Natural killer cell (primary cell): ENCODE measurements at regions of chr12 and their contacts with region 1.

Region 1: GRCh38 chr12:6925540-6926279 is 2.0 kb upstream of the ATN1 start:
- DNase-seq: no peak
- ATAC-seq: no peak
- H3K4me3 ChIP-seq: no peak overlapping the region
- H3K4me3 Mint-ChIP-seq: peak overlapping the region; percentile 90
- H3K27ac ChIP-seq: no peak overlapping the region
- H3K27ac Mint-ChIP-seq: peak overlapping the region in 1 of 2 donors; percentile 89
- H3K4me1 ChIP-seq: peaks cover 43% of the 10 kb centered on the region
- H3K4me1 Mint-ChIP-seq: peaks cover 38 to 43% of the 10 kb centered on the region in 2 donors
- H3K27me3 ChIP-seq: no peaks in the 10 kb centered on the region
- H3K27me3 Mint-ChIP-seq: no peaks in the 10 kb centered on the region
- CTCF ChIP-seq: no peak

Region 2: DNA sequence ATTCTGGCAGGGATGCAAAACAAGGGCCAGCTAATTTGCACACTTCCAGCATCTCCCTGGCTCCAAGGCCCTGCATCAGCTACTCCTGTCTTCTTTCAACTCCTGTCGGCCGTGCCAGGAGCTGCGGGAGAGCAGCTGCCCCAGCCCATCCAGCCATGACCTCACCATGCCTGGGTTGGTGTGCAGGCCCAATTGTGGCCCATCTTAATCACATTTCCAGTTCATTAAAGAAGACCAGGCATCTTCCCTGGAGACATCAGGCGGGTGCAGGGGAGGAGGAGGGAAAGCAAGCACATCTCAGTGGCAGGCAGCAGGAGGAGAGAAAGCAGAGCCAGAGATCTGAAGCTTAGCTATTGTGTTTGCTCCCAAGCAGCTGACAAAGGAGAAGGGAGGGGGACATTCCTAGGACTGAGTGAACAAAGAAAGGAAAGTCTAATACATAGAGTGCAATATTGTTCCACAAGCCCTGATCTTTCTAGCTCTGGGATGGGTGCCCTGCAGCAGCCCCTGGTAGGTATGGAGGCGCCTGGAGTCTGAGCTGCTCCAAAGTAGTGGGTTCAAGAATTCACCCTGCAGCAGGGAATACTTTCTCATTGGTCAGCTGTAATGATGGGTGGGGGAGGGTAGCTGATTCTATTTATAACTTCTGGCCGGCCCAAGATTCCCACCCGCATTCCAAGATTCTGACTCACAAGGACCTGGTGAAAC is 841.3 kb before region 1 on chr12:
- intact Hi-C with region 1: no loop called
- DNase-seq: no peak
- ATAC-seq: no peak
- H3K4me3 ChIP-seq: no peak overlapping the region
- H3K4me3 Mint-ChIP-seq: no peak overlapping the region
- H3K27ac ChIP-seq: no peak overlapping the region
- H3K27ac Mint-ChIP-seq: no peak overlapping the region
- H3K4me1 ChIP-seq: no peaks in the 10 kb centered on the region
- H3K4me1 Mint-ChIP-seq: no peaks in the 10 kb centered on the region
- H3K27me3 ChIP-seq: no peaks in the 10 kb centered on the region
- H3K27me3 Mint-ChIP-seq: peaks cover 7 to 9% of the 10 kb centered on the region in 2 donors
- CTCF ChIP-seq: no peak

Region 3: GRCh38 chr12:6647083-6647604 is 278.6 kb before region 1 on chr12 and contains the start of gene ACRBP:
- intact Hi-C with region 1: no loop called
- DNase-seq: peak; percentile 47 to 54
- ATAC-seq: peak; percentile 79 to 93 (median 92)
- H3K4me3 ChIP-seq: peak within 1 kb of the TSS; percentile 17
- H3K4me3 Mint-ChIP-seq: peak within 1 kb of the TSS; percentile 83
- H3K27ac ChIP-seq: peak within 1 kb of the TSS; percentile 17
- H3K27ac Mint-ChIP-seq: peak within 1 kb of the TSS; percentile 67 to 86
- H3K4me1 ChIP-seq: peaks cover 25% of the 10 kb centered on the region
- H3K4me1 Mint-ChIP-seq: peaks cover 7 to 11% of the 10 kb centered on the region in 2 donors
- H3K27me3 ChIP-seq: no peaks in the 10 kb centered on the region
- H3K27me3 Mint-ChIP-seq: no peaks in the 10 kb centered on the region
- CTCF ChIP-seq: no peak
- total RNA-seq, gene ACRBP: 2.1 to 12.2 (median 4.7) TPM

Region 4: DNA sequence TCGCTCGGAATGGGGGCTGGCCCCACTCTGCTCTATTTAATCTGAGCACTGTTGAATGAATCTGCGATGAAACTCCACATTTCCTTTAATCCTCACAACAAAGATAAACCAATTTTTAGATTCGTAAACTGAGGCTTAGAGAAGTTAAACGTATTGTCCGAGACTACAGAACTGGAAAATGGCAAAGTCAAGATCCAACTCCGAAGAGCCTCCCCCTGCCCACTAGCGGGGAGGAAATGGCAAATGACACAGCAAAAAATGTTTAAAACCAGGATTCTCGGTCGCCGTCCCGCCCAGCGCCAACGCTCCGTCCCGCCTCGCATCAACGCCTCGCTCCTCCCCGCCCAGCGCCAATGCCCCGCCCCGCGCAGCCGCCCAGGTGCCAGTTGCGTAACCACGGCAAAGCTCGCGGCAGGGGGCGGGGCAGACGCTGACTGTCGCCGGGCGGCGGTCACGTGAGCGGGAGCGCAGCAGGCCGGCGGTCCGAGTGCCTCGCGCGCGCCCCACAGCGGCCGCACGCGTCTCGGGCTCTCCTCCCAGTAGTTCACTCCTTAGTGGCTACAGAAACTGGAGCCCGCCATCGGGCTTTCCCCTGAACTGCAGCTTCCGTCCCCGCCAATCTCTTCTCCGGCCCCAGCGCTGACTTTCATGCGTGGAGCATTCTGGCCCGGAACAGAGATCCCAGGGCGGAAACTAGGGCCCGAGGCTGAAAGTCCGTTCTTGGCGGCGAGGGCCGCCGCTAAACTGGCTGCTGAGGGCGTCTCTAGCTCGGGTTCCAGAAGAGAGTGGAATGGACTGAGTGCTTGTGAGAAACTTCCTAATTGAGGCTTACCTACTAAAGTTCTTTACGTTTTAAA is 34.7 kb before region 1 on chr12:
- intact Hi-C with region 1: no loop called
- DNase-seq: peak; percentile 99
- ATAC-seq: peak; percentile 93 to 99 (median 94)
- H3K4me3 ChIP-seq: peak overlapping the region; percentile 70
- H3K4me3 Mint-ChIP-seq: peak overlapping the region; percentile 87
- H3K27ac ChIP-seq: peak overlapping the region; percentile 98
- H3K27ac Mint-ChIP-seq: peak overlapping the region; percentile 95 to 96
- H3K4me1 ChIP-seq: peaks cover 14% of the 10 kb centered on the region
- H3K4me1 Mint-ChIP-seq: peaks cover 11 to 15% of the 10 kb centered on the region in 2 donors
- H3K27me3 ChIP-seq: no peaks in the 10 kb centered on the region
- H3K27me3 Mint-ChIP-seq: no peaks in the 10 kb centered on the region
- CTCF ChIP-seq: peak; percentile 75

Region 5: GRCh38 chr12:6944381-6945186 is 18.9 kb after region 1 on chr12:
- intact Hi-C with region 1: loop called (anchors 2 kb)
- DNase-seq: peak; percentile 83 to 94
- ATAC-seq: peak; percentile 51 to 73 (median 53)
- H3K4me3 ChIP-seq: peak overlapping the region; percentile 91
- H3K4me3 Mint-ChIP-seq: peak overlapping the region; percentile 82
- H3K27ac ChIP-seq: peak overlapping the region; percentile 99
- H3K27ac Mint-ChIP-seq: peak overlapping the region; percentile 98 to 99
- H3K4me1 ChIP-seq: peaks cover 66% of the 10 kb centered on the region
- H3K4me1 Mint-ChIP-seq: peaks cover 61 to 69% of the 10 kb centered on the region in 2 donors
- H3K27me3 ChIP-seq: no peaks in the 10 kb centered on the region
- H3K27me3 Mint-ChIP-seq: no peaks in the 10 kb centered on the region
- CTCF ChIP-seq: peak; percentile 90

Region 6: GRCh38 chr12:7079826-7080125 is 154.1 kb after region 1 on chr12:
- intact Hi-C with region 1: no loop called
- DNase-seq: no peak
- ATAC-seq: no peak
- H3K4me3 ChIP-seq: no peak overlapping the region
- H3K4me3 Mint-ChIP-seq: no peak overlapping the region
- H3K27ac ChIP-seq: no peak overlapping the region
- H3K27ac Mint-ChIP-seq: no peak overlapping the region
- H3K4me1 ChIP-seq: no peaks in the 10 kb centered on the region
- H3K4me1 Mint-ChIP-seq: peaks cover 0 to 16% of the 10 kb centered on the region in 2 donors
- H3K27me3 ChIP-seq: no peaks in the 10 kb centered on the region
- H3K27me3 Mint-ChIP-seq: peaks cover 0 to 2% of the 10 kb centered on the region in 2 donors
- CTCF ChIP-seq: no peak

Region 7: DNA sequence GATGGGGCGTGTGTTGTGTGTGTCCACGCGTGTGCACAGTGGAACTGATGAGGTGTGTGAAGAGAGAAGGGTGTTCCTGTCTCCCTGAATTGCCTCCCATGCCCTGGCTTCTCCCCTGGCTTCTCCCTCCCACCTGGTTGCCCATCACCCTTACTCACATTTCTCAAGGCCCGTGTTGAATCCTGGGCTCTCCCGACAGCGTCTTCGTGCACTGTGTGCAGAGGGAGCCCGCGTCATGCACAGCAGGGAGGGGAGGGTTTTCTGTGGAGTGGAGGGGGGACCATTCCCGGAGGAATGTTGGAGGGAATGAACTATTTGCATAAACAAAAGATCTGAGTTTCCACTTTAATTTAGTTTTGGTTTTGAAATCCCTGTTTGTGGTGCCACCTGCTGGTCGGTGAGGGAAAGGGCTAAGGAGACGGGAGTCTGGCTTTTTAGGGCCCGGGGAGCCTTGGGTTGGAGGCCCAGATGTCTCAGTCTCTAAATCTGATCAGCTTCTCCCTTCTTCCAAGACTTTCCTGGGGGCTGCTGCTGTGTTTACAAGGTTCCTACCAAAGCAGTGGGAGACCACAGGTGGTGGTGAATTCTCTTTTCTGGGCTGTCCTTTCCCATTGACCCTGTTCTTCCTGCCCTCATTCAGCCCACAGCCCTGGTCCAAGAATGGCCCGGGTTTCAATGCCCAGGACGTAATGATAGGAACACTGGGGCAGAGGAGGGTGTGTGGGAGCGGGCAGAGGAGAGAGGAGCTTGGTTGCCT is 166.7 kb after region 1 on chr12 and contains the start of gene C1R:
- intact Hi-C with region 1: loop called (anchors 1 kb)
- DNase-seq: peak; percentile 64 to 85
- ATAC-seq: peak in 2 of 3 donors; percentile 82 to 86
- H3K4me3 ChIP-seq: peak within 1 kb of the TSS; percentile 25
- H3K4me3 Mint-ChIP-seq: peak within 1 kb of the TSS; percentile 77
- H3K27ac ChIP-seq: no peak within 1 kb of the TSS
- H3K27ac Mint-ChIP-seq: peak within 1 kb of the TSS; percentile 43 to 79
- H3K4me1 ChIP-seq: peaks cover 12% of the 10 kb centered on the region
- H3K4me1 Mint-ChIP-seq: peaks cover 0 to 22% of the 10 kb centered on the region in 2 donors
- H3K27me3 ChIP-seq: no peaks in the 10 kb centered on the region
- H3K27me3 Mint-ChIP-seq: no peaks in the 10 kb centered on the region
- CTCF ChIP-seq: peak; percentile 79
- total RNA-seq, gene C1R: 6.4 to 7.8 (median 6.6) TPM

Region 8: DNA sequence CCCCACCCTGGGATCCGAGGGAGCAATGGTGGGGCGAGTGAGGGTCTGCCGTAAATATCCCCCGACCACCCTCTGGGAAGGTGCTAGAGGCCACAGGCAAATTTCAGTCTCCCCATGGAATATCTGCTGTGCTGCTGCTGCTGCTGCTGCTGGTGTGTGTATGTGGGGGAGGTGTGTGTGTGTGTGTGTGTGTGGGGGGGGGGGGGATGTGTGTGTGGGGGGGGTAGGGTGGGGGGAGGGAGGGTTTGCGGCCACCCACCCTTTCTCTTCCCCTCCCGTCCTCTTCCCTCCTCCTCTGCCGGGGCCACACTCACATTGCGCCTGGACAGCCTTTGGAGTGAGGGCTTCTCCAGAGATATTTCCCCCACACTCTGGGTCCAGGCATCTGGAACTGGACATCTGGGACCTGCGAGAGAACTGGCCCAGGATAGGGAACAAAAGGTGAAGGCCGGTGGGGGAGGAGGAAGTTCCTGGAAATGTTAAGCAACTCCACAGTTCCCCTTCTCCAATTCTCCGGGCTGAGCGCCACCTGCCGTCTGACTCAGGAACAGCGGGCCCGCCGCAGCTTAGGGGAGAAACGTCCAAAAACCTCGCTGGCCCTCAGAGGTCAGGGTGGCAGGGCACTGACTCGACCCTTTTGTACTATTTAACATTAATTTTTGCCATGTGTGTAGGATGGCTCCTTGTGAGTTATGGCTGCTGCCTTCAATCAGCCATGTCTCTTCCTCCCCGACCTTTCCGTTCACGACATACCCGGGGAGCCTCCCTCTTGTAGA is 183.3 kb after region 1 on chr12 and contains the start of gene C1RL:
- intact Hi-C with region 1: loop called (anchors 1 kb)
- DNase-seq: peak; percentile 80 to 81
- ATAC-seq: peak; percentile 54 to 65 (median 63)
- H3K4me3 ChIP-seq: peak within 1 kb of the TSS; percentile 65
- H3K4me3 Mint-ChIP-seq: peak within 1 kb of the TSS; percentile 92
- H3K27ac ChIP-seq: peak within 1 kb of the TSS; percentile 72
- H3K27ac Mint-ChIP-seq: peak within 1 kb of the TSS; percentile 84 to 96
- H3K4me1 ChIP-seq: peaks cover 29% of the 10 kb centered on the region
- H3K4me1 Mint-ChIP-seq: peaks cover 40 to 46% of the 10 kb centered on the region in 2 donors
- H3K27me3 ChIP-seq: no peaks in the 10 kb centered on the region
- H3K27me3 Mint-ChIP-seq: no peaks in the 10 kb centered on the region
- CTCF ChIP-seq: peak; percentile 93
- total RNA-seq, gene C1RL: 29.1 to 35.5 (median 31.0) TPM